PC-9 (cell line): ENCODE measurements at regions of chr17 and their contacts with region 1.

Region 1: GRCh38 chr17:28812091-28812747 is 30.4 kb downstream of the FAM222B start:
- DNase-seq: peak; percentile 90 to 96
- H3K4me3 ChIP-seq: peak overlapping the region; percentile 85
- H3K27ac ChIP-seq: peak overlapping the region; percentile 95
- H3K4me1 ChIP-seq: peaks cover 47% of the 10 kb centered on the region
- H3K27me3 ChIP-seq: no peaks in the 10 kb centered on the region
- CTCF ChIP-seq: no peak

Region 2: DNA sequence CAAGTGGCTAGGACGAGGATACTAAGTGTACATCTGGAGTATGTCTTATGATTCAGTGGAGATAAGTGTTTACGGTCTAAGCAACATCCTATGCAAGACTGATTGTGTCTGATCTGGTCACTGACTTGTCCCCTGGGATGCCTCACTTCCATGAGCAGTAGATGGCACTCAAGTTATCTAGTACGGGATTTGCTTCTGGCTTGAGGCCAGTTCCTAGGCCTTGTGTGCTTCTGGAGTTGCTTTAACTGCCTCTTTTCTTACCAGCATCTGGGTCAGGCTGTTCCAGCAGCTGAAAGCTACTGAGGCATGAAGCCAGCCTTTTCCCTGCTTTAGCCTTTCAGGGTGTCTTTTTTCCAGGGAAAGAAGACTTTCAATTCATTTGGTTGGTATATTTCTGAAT is 127.3 kb before region 1 on chr17:
- CTCF ChIA-PET with region 1: no interaction called
- POLR2A ChIA-PET with region 1: interaction called, 10 read pairs
- intact Hi-C with region 1: no loop called
- DNase-seq: no peak
- H3K4me3 ChIP-seq: no peak overlapping the region
- H3K27ac ChIP-seq: no peak overlapping the region
- H3K4me1 ChIP-seq: no peaks in the 10 kb centered on the region
- H3K27me3 ChIP-seq: no peaks in the 10 kb centered on the region
- CTCF ChIP-seq: no peak

Region 3: GRCh38 chr17:28750178-28751047 is 61.8 kb before region 1 on chr17:
- CTCF ChIA-PET with region 1: interaction called, 9 read pairs
- POLR2A ChIA-PET with region 1: interaction called, 10 read pairs
- intact Hi-C with region 1: no loop called
- DNase-seq: peak; percentile 76 to 91
- H3K4me3 ChIP-seq: no peak overlapping the region
- H3K27ac ChIP-seq: no peak overlapping the region
- H3K4me1 ChIP-seq: peaks cover 43% of the 10 kb centered on the region
- H3K27me3 ChIP-seq: no peaks in the 10 kb centered on the region
- CTCF ChIP-seq: peak; percentile 98

Region 4: GRCh38 chr17:28777178-28777577 is 35.0 kb before region 1 on chr17:
- CTCF ChIA-PET with region 1: no interaction called
- POLR2A ChIA-PET with region 1: no interaction called
- intact Hi-C with region 1: no loop called
- DNase-seq: no peak
- H3K4me3 ChIP-seq: no peak overlapping the region
- H3K27ac ChIP-seq: peak overlapping the region; percentile 7; the same call in 1 of the 2 replicates
- H3K4me1 ChIP-seq: no peaks in the 10 kb centered on the region
- H3K27me3 ChIP-seq: no peaks in the 10 kb centered on the region
- CTCF ChIP-seq: no peak

Region 5: DNA sequence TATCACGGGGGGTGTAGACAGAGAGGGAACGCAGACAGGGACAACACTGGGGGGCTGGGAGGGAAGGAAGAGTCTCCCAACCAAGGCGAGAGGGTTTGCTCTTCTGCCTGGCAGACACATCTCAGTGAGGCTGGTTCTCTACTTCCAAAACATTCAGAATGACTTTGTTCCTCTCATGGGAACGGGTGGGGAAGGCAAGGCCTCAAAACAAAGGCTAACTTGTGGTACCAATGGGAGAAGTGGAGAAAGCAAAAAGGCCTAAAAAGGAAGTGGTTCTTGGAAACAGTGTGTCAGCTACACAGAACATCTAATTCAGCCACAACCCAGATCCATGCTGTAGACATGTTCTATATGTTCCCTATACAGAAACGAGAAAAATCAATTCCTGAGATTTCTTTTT is 77.8 kb after region 1 on chr17:
- CTCF ChIA-PET with region 1: no interaction called
- POLR2A ChIA-PET with region 1: interaction called, 23 read pairs
- intact Hi-C with region 1: no loop called
- DNase-seq: no peak
- H3K4me3 ChIP-seq: no peak overlapping the region
- H3K27ac ChIP-seq: no peak overlapping the region
- H3K4me1 ChIP-seq: no peaks in the 10 kb centered on the region
- H3K27me3 ChIP-seq: no peaks in the 10 kb centered on the region
- CTCF ChIP-seq: no peak

Region 6: GRCh38 chr17:28985950-28986713 is 173.9 kb after region 1 on chr17:
- CTCF ChIA-PET with region 1: no interaction called
- POLR2A ChIA-PET with region 1: no interaction called
- intact Hi-C with region 1: no loop called
- DNase-seq: no peak
- H3K4me3 ChIP-seq: no peak overlapping the region
- H3K27ac ChIP-seq: no peak overlapping the region
- H3K4me1 ChIP-seq: no peaks in the 10 kb centered on the region
- H3K27me3 ChIP-seq: peaks cover 24% of the 10 kb centered on the region; the same call in 1 of the 2 replicates
- CTCF ChIP-seq: no peak